ENCODE measurements at regions of chr17 and their contacts with region 1.

Region 1: DNA sequence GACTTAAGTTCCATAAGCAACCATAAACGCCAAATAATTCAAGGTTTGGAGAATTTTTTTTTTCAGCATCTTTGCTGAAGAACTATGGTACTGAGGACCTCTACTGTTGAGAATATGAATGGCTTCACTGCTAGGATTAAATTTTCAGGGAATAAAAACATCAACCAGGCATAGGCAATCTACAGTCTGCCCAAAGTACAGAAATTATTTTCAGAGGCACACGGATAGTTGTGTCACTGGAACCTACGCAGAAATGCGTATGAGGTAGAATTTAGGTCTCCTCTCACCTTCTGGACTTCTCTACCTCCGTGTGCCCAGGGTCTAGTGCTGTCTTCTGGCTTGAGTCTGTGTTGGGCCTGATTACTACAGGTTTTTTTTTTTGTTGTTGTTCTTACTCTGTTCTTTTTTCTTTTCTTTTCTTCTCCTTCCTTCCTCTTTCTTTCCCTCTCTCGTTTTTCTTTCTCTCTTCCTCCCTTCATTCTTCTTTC is 39.7 kb downstream of the NACA2 start:
- DNase-seq: peak; percentile 53
- CTCF ChIP-seq: peak; percentile 36

Region 2: GRCh38 chr17:61426013-61426730 is 125.1 kb before region 1 on chr17:
- in situ Hi-C with region 1: loop called (anchors 10 kb)
- DNase-seq: no peak
- CTCF ChIP-seq: no peak

Region 3: DNA sequence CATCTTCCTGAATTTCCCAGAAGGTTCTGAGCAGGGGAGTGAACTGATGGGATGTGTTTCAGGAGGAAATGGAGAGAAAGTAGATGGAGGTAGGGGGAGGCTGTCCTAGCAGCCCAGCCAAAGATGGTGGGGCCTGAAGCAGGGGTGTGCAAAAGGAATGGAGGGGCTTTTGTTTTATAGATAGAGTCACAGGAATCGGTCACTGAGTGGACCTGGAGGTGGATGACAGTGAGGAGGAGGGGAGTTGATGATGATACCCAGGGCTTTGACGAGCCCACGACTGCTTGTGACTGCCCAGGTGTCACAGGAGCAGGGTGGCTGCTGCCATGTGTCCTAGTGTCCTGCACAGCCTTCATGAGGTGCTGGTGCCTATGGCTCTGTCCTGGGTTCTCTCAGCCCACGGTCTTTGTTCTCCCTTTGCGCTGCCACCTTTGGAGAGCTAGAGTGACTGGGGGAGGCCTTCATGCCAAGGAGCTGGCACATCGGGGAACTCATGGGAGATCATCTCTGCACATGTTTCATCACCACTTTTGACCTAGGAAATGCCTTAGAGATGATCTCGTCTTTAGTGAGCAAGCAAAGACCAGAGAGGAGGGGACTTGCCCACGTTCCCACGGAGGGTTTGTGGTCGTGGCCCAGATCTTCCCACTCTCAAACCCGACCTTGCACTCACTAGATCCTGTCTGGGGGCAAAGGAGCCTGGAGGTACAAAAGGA is 75.7 kb before region 1 on chr17:
- in situ Hi-C with region 1: no loop called
- DNase-seq: no peak
- CTCF ChIP-seq: no peak

Region 4: DNA sequence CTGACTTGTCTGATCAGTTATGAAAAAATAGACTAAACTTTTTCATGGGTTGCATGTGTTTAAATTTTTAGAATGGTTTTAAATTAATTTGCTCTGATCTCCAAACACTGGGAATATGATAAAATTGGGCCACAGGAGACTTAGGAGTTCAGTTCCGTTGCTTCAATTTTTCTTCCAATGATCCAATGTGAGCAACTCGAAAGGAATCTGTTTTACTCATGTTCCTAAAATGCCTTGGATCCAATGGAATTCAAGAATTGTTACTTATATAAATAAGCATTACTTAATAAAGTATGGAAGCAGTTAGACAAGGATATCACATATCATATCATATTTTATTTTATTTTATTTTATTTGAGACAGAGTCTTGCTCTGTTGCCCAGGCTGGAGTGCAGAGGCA is 95.7 kb after region 1 on chr17:
- in situ Hi-C with region 1: no loop called
- DNase-seq: no peak
- CTCF ChIP-seq: no peak

Measured in GM13976 (cell line).